Sciatic nerve (tissue), 2 donors: ENCODE measurements at regions of chr6 and their contacts with region 1.

Region 1: DNA sequence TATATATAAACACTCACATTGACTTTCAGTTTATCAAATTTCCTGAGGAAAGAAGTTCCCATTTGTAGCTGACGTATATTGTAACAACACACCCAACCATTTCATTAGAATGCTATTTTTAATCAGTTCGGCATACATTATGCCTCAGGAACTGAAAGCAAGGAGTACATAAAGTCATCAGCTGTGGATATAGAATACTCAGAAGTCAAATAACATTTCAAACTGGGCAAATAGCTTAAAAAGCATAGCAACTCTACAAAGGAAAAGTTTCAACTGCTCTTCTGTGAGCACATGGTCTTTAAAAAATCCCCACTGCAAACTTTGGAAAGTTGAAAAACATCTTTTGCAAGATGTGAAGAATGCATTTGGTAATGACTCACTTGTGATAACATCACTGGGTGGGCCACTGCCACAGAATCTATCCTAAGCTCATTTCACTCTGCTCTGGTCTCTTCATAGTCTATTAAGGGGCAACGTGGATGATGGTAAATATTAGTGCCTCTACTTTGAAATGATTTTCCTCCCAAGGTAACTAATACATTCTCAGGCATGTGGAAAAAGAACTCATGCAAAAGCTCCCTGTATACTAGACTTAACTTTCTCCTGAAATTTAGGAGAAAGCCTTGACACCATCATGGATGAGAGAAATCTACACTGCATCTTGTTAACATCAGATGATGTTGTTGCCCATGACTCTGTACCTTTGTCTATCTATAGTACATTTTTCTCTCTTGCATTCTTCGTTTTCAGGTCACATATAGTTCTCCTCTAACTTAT is 49.2 kb downstream of the FYN start:
- DNase-seq: no peak
- ATAC-seq: peak; percentile 83

Region 2: DNA sequence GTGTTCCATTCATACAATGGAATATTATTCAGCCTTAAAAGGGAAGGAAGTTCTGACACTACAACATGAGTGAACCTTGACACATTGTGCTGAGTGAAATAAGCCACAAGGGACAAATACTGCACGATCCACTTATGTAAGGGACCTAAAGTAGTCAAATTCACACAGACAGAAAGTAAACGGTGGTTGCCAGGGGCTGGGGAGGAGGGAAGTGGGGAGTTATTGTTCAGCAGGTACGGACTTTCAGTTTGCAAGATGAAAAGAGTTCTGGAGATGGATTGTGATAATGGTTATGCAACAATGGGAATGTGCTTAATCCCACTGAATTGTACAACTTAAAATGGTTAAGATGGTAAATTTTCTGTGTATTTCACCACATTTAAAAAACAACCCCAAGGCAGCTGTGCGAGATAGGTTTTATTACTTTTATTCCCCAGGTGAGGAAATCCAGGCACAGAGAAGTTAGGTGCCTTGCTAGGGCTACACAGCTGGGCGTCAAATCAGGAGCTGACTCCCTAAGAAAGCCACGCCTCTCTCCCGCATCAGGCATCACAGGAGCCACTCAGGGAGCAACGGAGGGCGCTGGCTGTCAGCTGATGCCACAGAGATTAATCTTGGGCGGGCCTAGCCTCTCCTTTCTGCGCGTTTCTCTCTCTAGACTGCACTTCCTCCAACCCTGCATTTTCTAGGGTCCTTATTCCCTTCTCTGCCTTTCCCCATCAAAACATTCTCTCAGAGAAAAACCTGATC is 209.0 kb before region 1 on chr6:
- intact Hi-C with region 1: no loop called
- DNase-seq: no peak
- ATAC-seq: no peak

Region 3: GRCh38 chr6:111774346-111774703 is 49.7 kb before region 1 on chr6:
- intact Hi-C with region 1: no loop called
- DNase-seq: no peak
- ATAC-seq: peak; percentile 44

Region 4: GRCh38 chr6:111864138-111865048 is 40.4 kb after region 1 on chr6:
- intact Hi-C with region 1: loop called (anchors 1 kb)
- DNase-seq: no peak
- ATAC-seq: no peak